ENCODE measurements at regions of chr2 and their contacts with region 1.

Region 1: DNA sequence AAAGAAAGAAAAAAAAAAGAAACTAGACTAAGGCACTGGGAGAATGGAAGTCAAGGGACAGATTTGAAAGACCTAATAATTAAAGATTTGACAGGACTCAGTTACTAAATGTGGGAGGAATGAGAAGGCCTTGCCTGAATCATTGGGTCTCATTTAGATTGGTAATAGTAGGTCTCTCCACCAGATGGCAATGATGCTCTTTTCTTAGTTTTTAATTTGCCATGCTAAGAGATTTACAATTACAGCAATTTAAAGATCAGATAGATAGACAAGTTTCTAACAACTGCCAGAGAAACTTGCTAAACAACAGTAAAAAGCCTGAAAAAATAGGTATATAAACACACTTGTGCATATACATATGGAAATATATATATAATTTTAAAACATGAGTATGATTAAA is 153.0 kb downstream of the TMEM247 start:
- DNase-seq: peak in 2 of 5 donors; percentile 57 to 77
- H3K4me3 ChIP-seq: no peak overlapping the region
- H3K27ac ChIP-seq: no peak overlapping the region
- H3K4me1 ChIP-seq: no peaks in the 10 kb centered on the region
- H3K27me3 ChIP-seq: no peaks in the 10 kb centered on the region
- CTCF ChIP-seq: peak; percentile 40

Region 2: GRCh38 chr2:45821564-45822271 is 810.6 kb before region 1 on chr2:
- intact Hi-C with region 1: no loop called
- DNase-seq: peak in 3 of 5 donors; percentile 31 to 71 (median 64)
- H3K4me3 ChIP-seq: no peak overlapping the region
- H3K27ac ChIP-seq: peak overlapping the region; percentile 39
- H3K4me1 ChIP-seq: peaks cover 0 to 16% (median 14%) of the 10 kb centered on the region in 3 donors
- H3K27me3 ChIP-seq: no peaks in the 10 kb centered on the region
- CTCF ChIP-seq: no peak

Region 3: DNA sequence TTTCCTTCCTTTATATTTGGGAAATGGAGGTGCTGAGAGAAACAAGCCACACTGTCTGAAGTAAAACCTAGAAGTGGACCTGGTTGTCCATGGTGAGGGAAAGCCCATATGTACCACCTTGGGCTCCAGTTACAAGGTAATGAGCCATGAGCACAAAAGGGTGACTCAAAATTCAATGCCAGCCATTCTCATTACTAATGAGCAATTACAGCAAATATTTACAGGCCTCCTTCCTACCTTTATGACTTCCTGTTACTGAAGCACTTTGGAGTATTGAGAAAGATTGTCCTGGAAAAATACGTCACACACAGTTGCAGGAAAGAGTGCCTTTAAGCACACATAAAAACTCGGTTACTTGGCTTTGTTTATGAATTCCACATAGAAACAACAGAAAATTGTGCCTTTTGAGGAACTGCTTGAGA is 326.0 kb before region 1 on chr2:
- intact Hi-C with region 1: no loop called
- DNase-seq: peak in 2 of 5 donors; percentile 68
- H3K4me3 ChIP-seq: peak overlapping the region in 1 of 3 donors; percentile 7
- H3K27ac ChIP-seq: peak overlapping the region; percentile 73 to 80
- H3K4me1 ChIP-seq: peaks cover 0 to 48% (median 32%) of the 10 kb centered on the region in 3 donors
- H3K27me3 ChIP-seq: no peaks in the 10 kb centered on the region
- CTCF ChIP-seq: no peak

Region 4: DNA sequence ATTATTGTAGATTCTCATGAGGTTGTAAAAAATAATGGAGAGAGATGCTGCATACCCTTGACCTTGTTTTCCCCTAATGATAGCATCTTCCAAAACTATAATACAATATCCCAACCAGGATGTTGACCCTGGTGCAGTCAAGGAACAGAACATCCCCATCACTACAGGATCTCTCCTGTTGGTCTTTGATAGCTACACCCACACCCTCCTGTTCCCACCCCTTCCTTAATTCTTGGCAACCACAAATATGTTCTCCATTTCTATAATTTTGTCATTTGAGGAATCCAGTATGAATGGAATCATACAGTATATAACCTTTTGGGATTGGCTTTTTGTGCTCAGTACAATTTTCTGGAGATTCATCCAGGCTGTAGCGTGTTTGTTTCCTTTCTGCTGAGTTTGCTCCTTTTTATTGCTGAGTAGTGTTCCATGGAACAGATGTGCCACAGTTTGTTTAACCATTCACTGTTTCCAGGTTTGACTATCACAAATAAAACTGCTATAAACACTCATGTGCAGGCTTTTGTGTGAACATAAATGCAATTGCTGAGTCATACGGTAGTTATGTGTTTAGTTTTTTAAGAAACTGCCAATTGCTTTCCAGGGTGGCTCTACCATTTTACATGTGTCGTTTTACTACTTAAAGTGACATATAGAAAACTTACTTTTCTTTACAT is 261.1 kb after region 1 on chr2:
- intact Hi-C with region 1: loop called (anchors 10 kb)
- DNase-seq: no peak
- H3K4me3 ChIP-seq: no peak overlapping the region
- H3K27ac ChIP-seq: no peak overlapping the region
- H3K4me1 ChIP-seq: no peaks in the 10 kb centered on the region
- H3K27me3 ChIP-seq: no peaks in the 10 kb centered on the region
- CTCF ChIP-seq: no peak